Common myeloid progenitor, CD34-positive (primary cell): ENCODE measurements at regions of chr14 and their contacts with region 1.

Region 1: GRCh38 chr14:73759714-73760597 is 45.8 kb upstream of the PNMA1 start:
- DNase-seq: peak; percentile 96 to 99 (median 99)
- H3K4me3 ChIP-seq: peak overlapping the region; percentile 66 to 88 (median 77)
- H3K27ac ChIP-seq: peak overlapping the region; percentile 86 to 99
- H3K4me1 ChIP-seq: peaks cover 29 to 84% (median 78%) of the 10 kb centered on the region in 4 experiments
- H3K27me3 ChIP-seq: no peaks in the 10 kb centered on the region

Region 2: GRCh38 chr14:73728717-73729330 is 31.1 kb before region 1 on chr14:
- CTCF ChIA-PET with region 1: interaction called, 146 read pairs
- POLR2A ChIA-PET with region 1: interaction called, 7 read pairs
- DNase-seq: peak; percentile 77 to 87 (median 78)
- H3K4me3 ChIP-seq: no peak overlapping the region
- H3K27ac ChIP-seq: peak overlapping the region in 1 of 2 experiments; percentile 52
- H3K4me1 ChIP-seq: peaks cover 0 to 33% (median 29%) of the 10 kb centered on the region in 4 experiments
- H3K27me3 ChIP-seq: no peaks in the 10 kb centered on the region

Region 3: DNA sequence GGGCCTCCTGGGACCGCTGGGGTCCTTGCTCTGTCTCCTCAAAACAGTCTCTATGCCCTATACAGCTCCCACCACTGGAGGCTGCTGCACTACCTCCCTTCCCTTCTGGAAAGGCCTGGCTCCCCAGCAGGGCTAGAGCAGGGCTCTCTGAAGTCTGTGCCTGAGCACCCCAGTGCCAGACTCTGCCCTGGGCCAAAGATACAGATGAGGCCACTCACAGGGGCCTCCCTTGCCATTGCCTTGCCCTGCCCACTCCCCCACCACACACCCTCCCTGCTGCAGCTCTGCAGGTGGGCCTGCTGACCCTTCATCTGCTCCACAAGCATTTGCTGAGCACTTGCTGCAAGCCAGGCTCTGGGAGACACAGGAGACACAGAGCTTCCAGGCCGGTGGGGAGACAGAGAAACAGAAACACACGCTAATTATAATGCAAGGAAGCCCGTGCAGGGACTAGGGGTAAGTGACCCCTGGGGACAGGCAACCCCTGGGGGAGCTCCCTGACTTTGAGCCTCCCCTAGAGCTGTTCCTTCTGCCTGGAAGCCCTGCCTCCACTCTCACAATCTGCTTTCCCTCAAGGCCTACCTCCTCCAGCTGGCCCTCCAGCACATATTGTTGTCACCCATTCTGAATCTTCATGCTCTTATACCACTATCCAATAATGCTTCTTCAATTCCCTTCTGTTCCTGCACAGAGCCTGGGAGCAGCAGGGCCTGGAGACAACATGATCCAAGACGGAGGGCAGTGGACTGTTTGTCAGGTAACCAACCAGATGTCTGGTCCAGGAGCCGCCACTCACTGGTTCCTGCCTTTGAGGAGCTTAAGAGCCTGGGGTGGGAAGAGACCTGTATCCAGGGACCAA is 13.2 kb before region 1 on chr14:
- CTCF ChIA-PET with region 1: interaction called, 225 read pairs
- POLR2A ChIA-PET with region 1: interaction called, 112 read pairs
- DNase-seq: peak in 2 of 3 donors; percentile 43 to 44
- H3K4me3 ChIP-seq: peak overlapping the region in 4 of 7 experiments; percentile 14 to 51 (median 30)
- H3K27ac ChIP-seq: peak overlapping the region; percentile 87 to 99
- H3K4me1 ChIP-seq: peaks cover 35 to 100% (median 95%) of the 10 kb centered on the region in 4 experiments
- H3K27me3 ChIP-seq: no peaks in the 10 kb centered on the region

Region 4: DNA sequence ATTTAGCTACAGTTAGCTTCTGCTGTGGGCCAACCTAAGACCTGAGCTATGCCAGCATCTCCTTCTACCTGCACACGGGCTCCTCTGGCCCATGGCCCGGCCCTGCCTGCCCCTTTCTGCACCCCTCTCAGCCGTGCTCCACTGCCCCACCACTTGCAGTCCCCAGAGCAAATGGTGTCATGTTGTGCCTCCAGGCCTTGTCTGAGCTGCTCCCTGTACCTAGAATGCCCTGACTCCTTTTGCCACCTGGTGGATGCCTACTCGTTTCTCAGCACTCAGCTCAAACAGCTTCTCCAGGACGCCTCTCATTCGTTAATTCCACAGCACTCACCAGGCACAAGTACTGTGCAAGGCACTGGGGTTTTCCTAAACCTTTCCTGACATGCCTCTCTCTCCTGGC is 17.4 kb after region 1 on chr14:
- CTCF ChIA-PET with region 1: interaction called, 32 read pairs
- POLR2A ChIA-PET with region 1: interaction called, 17 read pairs
- DNase-seq: peak in 1 of 3 donors; percentile 55
- H3K4me3 ChIP-seq: no peak overlapping the region
- H3K27ac ChIP-seq: no peak overlapping the region
- H3K4me1 ChIP-seq: peaks cover 2 to 38% (median 21%) of the 10 kb centered on the region in 4 experiments
- H3K27me3 ChIP-seq: no peaks in the 10 kb centered on the region

Region 5: DNA sequence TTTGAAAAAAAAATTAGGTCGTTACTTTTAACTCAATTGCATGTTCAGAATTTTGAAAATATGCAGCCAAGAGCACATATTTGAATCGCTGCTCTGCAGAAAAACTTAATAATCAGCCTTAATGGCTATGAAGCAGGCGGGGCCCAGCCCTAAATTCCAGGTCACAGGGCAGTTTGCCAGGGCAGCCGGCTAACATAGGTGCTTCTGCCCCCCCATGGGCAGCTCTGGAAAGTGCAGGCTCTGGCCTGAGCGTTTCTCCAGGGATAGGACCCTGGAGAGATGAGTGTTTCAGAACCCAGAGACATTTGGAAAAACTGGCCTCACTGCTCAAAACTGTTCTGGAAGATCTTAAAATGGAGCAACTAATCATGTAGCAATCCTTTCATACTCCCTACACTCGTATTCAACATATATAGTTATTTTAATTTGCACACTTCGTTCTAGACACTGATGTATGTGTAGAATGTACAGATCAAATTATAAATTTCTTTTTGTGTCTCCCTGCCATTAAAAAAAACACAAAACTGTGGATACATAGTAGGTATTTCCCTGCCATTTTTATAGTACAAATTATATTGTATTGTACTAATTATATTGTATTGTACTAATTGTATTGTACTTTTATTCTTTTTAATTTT is 65.7 kb after region 1 on chr14:
- CTCF ChIA-PET with region 1: interaction called, 10 read pairs
- POLR2A ChIA-PET with region 1: interaction called, 3 read pairs
- DNase-seq: peak; percentile 84 to 91 (median 88)
- H3K4me3 ChIP-seq: no peak overlapping the region
- H3K27ac ChIP-seq: no peak overlapping the region
- H3K4me1 ChIP-seq: peaks cover 0 to 12% (median 3%) of the 10 kb centered on the region in 4 experiments
- H3K27me3 ChIP-seq: no peaks in the 10 kb centered on the region